PC-3 (cell line): ENCODE measurements at regions of chr17 and their contacts with region 1.

Region 1: DNA sequence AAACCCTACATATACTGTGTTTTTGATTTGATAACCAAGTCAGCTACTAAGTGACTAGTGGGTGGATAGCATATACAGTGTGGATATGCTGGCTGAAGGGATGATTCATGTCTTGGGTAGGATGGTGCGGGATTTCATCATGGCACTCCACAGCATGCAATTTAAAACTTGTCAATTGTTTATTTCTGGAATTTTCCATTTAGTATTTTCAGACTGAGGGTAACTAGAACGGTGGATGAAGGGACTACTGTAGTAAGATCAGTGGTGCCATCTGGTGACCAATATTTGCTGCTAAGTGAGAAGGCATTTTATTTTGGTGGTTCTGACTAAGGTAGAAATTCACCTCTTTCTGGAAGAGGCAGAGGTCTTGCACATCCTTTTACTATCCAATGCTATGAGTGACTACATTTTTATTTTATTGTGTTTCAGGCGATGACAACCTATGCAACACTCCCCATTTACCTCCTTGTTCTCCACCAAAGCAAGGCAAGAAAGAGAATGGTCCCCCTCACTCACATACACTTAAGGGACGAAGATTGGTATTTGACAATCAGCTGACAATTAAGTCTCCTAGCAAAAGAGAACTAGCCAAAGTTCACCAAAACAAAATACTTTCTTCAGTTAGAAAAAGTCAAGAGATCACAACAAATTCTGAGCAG is 3.1 kb downstream of the CDC6 start:
- DNase-seq: peak; percentile 76
- ATAC-seq: peak; percentile 23
- H3K4me3 ChIP-seq: no peak overlapping the region
- H3K27ac ChIP-seq: no peak overlapping the region
- H3K4me1 ChIP-seq: peaks cover 14% of the 10 kb centered on the region; the same call in 1 of the 2 replicates
- H3K27me3 ChIP-seq: no peaks in the 10 kb centered on the region
- CTCF ChIP-seq: peak; percentile 74

Region 2: GRCh38 chr17:40203131-40203530 is 87.6 kb before region 1 on chr17:
- CTCF ChIA-PET with region 1: interaction called, 4 read pairs
- POLR2A ChIA-PET with region 1: no interaction called
- intact Hi-C with region 1: loop called (anchors 1 kb)
- DNase-seq: no peak
- ATAC-seq: no peak
- H3K4me3 ChIP-seq: no peak overlapping the region
- H3K27ac ChIP-seq: no peak overlapping the region
- H3K4me1 ChIP-seq: no peaks in the 10 kb centered on the region
- H3K27me3 ChIP-seq: no peaks in the 10 kb centered on the region
- CTCF ChIP-seq: no peak

Region 3: DNA sequence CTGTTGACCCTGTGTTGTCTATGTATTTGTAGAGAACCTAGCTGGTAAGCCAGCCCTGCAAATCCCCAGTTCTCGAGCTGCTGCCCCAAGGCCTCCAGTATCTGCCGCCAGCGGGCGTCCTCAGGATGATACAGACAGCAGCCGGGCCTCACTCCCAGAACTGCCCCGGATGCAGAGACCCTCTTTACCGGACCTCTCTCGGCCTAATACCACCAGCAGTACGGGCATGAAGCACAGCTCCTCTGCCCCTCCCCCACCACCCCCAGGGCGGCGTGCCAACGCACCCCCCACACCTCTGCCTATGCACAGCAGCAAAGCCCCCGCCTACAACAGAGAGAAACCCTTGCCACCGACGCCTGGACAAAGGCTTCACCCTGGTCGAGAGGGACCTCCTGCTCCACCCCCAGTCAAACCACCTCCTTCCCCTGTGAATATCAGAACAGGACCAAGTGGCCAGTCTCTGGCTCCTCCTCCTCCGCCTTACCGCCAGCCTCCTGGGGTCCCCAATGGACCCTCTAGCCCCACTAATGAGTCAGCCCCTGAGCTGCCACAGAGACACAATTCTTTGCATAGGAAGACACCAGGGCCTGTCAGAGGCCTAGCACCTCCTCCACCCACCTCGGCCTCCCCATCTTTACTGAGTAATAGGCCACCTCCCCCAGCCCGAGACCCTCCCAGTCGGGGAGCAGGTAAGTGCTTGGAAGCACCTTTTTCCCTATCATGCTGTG is 26.1 kb before region 1 on chr17:
- CTCF ChIA-PET with region 1: no interaction called
- POLR2A ChIA-PET with region 1: no interaction called
- intact Hi-C with region 1: no loop called
- DNase-seq: no peak
- ATAC-seq: no peak
- H3K4me3 ChIP-seq: no peak overlapping the region
- H3K27ac ChIP-seq: no peak overlapping the region
- H3K4me1 ChIP-seq: no peaks in the 10 kb centered on the region
- H3K27me3 ChIP-seq: no peaks in the 10 kb centered on the region
- CTCF ChIP-seq: no peak

Region 4: GRCh38 chr17:40317880-40318829 is 27.4 kb after region 1 on chr17:
- CTCF ChIA-PET with region 1: no interaction called
- POLR2A ChIA-PET with region 1: no interaction called
- intact Hi-C with region 1: no loop called
- DNase-seq: peak; percentile 91
- ATAC-seq: peak; percentile 69
- H3K4me3 ChIP-seq: peak overlapping the region; percentile 99
- H3K27ac ChIP-seq: peak overlapping the region; percentile 83
- H3K4me1 ChIP-seq: peaks cover 74% of the 10 kb centered on the region
- H3K27me3 ChIP-seq: no peaks in the 10 kb centered on the region
- CTCF ChIP-seq: no peak